Natural killer cell (primary cell): ENCODE measurements at regions of chr6 and their contacts with region 1.

Region 1: GRCh38 chr6:30450909-30451841 is 38.1 kb upstream of the HLA-E start:
- DNase-seq: peak; percentile 50 to 88
- ATAC-seq: peak; percentile 68 to 78 (median 74)
- H3K4me3 ChIP-seq: peak overlapping the region; percentile 11
- H3K4me3 Mint-ChIP-seq: peak overlapping the region; percentile 87
- H3K27ac ChIP-seq: no peak overlapping the region
- H3K27ac Mint-ChIP-seq: peak overlapping the region in 1 of 2 donors; percentile 72
- H3K4me1 ChIP-seq: peaks cover 46% of the 10 kb centered on the region
- H3K4me1 Mint-ChIP-seq: peaks cover 41 to 44% of the 10 kb centered on the region in 2 donors
- H3K27me3 ChIP-seq: peaks cover 76% of the 10 kb centered on the region
- H3K27me3 Mint-ChIP-seq: peaks cover 69 to 82% of the 10 kb centered on the region in 2 donors
- CTCF ChIP-seq: no peak

Region 2: GRCh38 chr6:30130887-30131862 is 320.0 kb before region 1 on chr6:
- intact Hi-C with region 1: no loop called
- DNase-seq: peak; percentile 36 to 94
- ATAC-seq: peak; percentile 95 to 99 (median 98)
- H3K4me3 ChIP-seq: no peak overlapping the region
- H3K4me3 Mint-ChIP-seq: no peak overlapping the region
- H3K27ac ChIP-seq: no peak overlapping the region
- H3K27ac Mint-ChIP-seq: no peak overlapping the region
- H3K4me1 ChIP-seq: peaks cover 4% of the 10 kb centered on the region
- H3K4me1 Mint-ChIP-seq: peaks cover 5 to 7% of the 10 kb centered on the region in 2 donors
- H3K27me3 ChIP-seq: peaks cover 26% of the 10 kb centered on the region
- H3K27me3 Mint-ChIP-seq: peaks cover 48 to 68% of the 10 kb centered on the region in 2 donors
- CTCF ChIP-seq: peak; percentile 100

Region 3: GRCh38 chr6:30378290-30378937 is 72.8 kb before region 1 on chr6:
- intact Hi-C with region 1: no loop called
- DNase-seq: peak in 1 of 2 donors; percentile 11
- ATAC-seq: no peak
- H3K4me3 ChIP-seq: no peak overlapping the region
- H3K4me3 Mint-ChIP-seq: no peak overlapping the region
- H3K27ac ChIP-seq: no peak overlapping the region
- H3K27ac Mint-ChIP-seq: no peak overlapping the region
- H3K4me1 ChIP-seq: no peaks in the 10 kb centered on the region
- H3K4me1 Mint-ChIP-seq: no peaks in the 10 kb centered on the region
- H3K27me3 ChIP-seq: peaks cover 13% of the 10 kb centered on the region
- H3K27me3 Mint-ChIP-seq: peaks cover 43 to 83% of the 10 kb centered on the region in 2 donors
- CTCF ChIP-seq: no peak

Region 4: DNA sequence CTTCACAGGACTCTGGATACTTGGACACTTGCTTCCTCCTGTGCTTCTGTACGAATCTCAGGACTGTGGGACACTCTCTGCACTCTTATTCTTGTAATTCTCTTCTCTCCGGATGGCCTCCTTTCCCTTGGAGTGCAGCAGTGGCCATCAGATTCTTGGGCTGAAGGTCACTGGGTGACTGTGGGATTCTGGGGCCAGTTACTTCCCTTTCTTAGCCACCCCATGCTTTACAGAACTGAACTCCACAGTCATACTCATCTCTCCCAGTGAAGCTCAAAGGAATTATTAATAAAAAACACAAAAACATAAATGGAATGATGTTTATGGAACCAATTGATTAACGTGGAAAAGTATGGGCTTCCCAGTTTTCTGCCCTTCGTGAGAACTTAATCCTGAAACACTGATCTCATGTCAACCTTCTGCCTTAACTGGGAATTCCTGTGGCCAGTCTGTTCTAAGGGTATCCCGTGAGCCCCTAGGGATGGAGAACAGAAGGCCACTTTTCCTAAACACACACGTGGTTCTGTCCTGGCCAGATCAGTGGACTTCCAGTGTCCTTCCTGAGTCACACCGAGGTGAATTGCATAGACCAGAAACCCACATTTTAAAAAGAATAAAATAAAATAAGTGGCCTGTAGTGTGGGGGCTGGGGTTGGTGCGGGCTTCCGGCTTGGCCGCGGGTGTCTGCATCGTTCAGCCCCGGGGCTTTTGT is 14.6 kb after region 1 on chr6:
- intact Hi-C with region 1: loop called (anchors 2 kb)
- DNase-seq: no peak
- ATAC-seq: no peak
- H3K4me3 ChIP-seq: no peak overlapping the region
- H3K4me3 Mint-ChIP-seq: peak overlapping the region; percentile 89
- H3K27ac ChIP-seq: no peak overlapping the region
- H3K27ac Mint-ChIP-seq: no peak overlapping the region
- H3K4me1 ChIP-seq: peaks cover 52% of the 10 kb centered on the region
- H3K4me1 Mint-ChIP-seq: peaks cover 51 to 55% of the 10 kb centered on the region in 2 donors
- H3K27me3 ChIP-seq: peaks cover 83% of the 10 kb centered on the region
- H3K27me3 Mint-ChIP-seq: peaks cover 74 to 86% of the 10 kb centered on the region in 2 donors
- CTCF ChIP-seq: no peak